ENCODE measurements at regions of chr17 and their contacts with region 1.

Region 1: GRCh38 chr17:9676742-9677387 is 31.5 kb downstream of the USP43 start:
- DNase-seq: no peak
- H3K4me3 ChIP-seq: no peak overlapping the region
- H3K4me3 Mint-ChIP-seq: no peak overlapping the region
- H3K27ac Mint-ChIP-seq: no peak overlapping the region
- H3K4me1 ChIP-seq: no peaks in the 10 kb centered on the region
- H3K4me1 Mint-ChIP-seq: no peaks in the 10 kb centered on the region
- H3K27me3 ChIP-seq: no peaks in the 10 kb centered on the region
- H3K27me3 Mint-ChIP-seq: no peaks in the 10 kb centered on the region
- CTCF ChIP-seq: no peak

Region 2: DNA sequence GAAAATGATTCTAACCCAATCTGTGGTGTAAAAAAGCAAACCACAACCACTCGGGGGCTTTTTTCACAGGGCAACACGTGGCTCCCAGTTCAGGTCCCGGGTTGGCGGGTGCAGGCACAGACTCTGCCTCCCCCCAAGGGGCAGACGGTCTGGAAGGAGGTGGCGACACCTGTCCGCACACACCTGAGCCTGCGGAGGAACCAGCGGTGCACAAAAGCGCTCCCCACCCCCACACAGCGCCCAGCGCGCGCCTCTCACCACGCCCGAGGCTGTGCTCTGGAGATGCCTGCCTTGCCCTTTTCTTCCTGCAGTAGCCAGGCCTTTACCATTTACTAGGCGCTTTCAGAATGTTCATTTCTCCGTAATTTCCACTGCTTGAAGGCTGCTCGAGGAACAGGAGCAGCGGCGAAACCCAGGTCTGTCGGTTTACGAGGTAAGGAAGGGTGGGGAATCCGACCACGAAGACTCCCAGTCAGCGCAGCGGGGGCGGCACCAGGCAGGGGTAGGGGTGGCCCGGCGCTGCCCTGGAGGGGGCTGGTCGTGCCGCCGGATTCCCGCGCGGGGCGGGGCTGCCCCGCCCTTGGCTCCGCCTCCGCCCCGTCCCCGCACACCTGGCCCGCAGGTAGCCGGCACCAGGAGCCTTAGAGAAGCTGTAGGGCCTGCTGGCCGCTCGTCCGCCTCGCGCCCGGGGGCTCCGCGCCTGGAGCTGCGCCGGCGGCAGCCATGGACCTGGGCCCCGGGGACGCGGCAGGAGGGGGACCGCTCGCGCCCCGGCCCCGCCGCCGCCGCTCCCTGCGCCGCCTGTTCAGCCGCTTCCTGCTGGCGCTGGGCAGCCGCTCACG is 31.7 kb before region 1 on chr17 and contains the start of gene USP43:
- CTCF ChIA-PET with region 1: no interaction called
- POLR2A ChIA-PET with region 1: no interaction called
- intact Hi-C with region 1: loop called (anchors 2 kb)
- DNase-seq: peak; percentile 64 to 75
- H3K4me3 ChIP-seq: peak within 1 kb of the TSS; percentile 58
- H3K4me3 Mint-ChIP-seq: peak within 1 kb of the TSS; percentile 90
- H3K27ac Mint-ChIP-seq: peak within 1 kb of the TSS; percentile 79
- H3K4me1 ChIP-seq: peaks cover 20% of the 10 kb centered on the region
- H3K4me1 Mint-ChIP-seq: peaks cover 12% of the 10 kb centered on the region
- H3K27me3 ChIP-seq: no peaks in the 10 kb centered on the region
- H3K27me3 Mint-ChIP-seq: no peaks in the 10 kb centered on the region
- CTCF ChIP-seq: no peak
- total RNA-seq, gene USP43: 6.0 and 6.5 TPM in 2 replicates

Measured in Caco-2 (cell line).